Activated CD8-positive, alpha-beta T cell treated with anti-CD3 and anti-CD28 coated beads, Interleukin-2, amount 10 ng/mL, durations not matched to agents 7 days and 5 days (primary cell): ENCODE measurements at regions of chr17 and their contacts with region 1.

Region 1: DNA sequence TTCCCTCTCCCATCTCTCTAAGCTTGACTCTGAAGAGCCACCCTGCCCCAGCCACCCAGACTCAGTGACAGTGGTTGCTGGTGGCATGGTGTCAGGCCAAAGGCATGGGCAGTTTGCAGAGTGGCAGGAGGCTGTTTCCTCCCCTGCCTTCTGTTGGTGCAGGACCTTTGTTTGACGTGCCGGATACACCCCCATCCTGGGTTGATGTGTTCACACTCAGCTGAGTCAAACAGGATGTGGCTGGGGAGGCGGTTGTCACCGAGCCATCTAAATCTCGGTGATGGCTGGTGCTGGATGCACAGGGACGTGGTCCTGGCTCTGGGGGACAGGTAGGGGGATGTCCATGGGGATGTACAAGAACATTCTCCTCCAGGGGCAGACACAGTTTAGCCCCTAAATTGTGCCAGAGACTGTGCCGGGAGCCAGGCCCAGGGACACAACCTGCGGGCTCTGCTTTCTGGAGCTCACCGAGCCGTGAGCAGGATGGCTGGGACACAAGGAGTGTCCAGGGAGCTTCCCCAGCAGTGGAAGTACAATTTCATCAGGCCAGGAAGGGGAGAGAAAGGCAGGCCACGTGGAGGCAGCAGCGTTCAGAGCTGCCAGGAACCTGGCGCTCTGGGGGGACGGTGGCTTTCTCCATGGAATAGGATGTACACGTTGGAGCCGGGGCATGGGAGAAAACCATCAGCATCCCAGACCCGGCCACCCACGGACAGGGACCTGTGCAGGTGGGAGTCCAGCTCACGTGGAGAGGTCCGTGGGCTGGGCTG is 264.2 kb downstream of the SEC14L1 start:
- DNase-seq: peak; percentile 94
- ATAC-seq: peak; percentile 75
- H3K4me3 Mint-ChIP-seq: peak overlapping the region; percentile 92
- H3K27ac Mint-ChIP-seq: peak overlapping the region; percentile 89
- H3K4me1 Mint-ChIP-seq: peaks cover 97% of the 10 kb centered on the region
- H3K27me3 Mint-ChIP-seq: no peaks in the 10 kb centered on the region

Region 2: DNA sequence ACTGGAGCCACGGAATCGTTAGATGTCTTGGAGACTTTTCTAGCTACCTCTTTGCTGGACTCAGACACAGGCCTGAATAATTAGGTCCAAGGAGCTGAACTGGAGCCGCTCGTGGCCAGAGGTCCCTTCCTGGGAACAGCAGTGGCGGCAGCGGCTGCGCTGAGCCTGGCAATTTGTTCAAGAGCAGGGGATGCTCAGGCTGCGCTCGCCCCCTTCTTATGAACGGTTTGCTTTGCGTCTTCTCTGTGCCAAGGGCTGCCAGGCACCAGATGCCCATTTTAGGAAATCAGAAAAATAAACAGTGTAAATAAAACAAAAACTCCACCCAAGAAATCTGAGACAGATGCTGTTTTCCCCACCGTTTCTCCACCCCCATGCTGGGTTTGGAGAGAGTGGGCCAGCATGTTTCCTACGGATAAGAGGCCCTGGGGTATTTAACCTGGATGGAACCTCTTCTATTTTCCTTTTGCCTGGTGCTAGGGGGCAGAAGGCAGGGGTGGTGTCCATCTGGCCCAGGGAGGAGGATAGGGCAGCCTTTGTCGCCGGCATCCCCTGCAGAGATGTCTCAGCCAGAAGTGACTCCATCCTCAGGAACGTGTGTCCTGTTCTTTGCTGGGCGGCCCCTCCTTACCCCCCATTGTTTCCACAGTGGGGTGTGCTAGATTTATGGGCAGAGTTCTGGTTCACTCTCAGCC is 100.8 kb before region 1 on chr17:
- CTCF ChIA-PET with region 1: no interaction called
- POLR2A ChIA-PET with region 1: no interaction called
- DNase-seq: no peak
- ATAC-seq: no peak
- H3K4me3 Mint-ChIP-seq: no peak overlapping the region
- H3K27ac Mint-ChIP-seq: no peak overlapping the region
- H3K4me1 Mint-ChIP-seq: no peaks in the 10 kb centered on the region
- H3K27me3 Mint-ChIP-seq: no peaks in the 10 kb centered on the region

Region 3: GRCh38 chr17:77372444-77373298 is 32.3 kb before region 1 on chr17:
- CTCF ChIA-PET with region 1: interaction called, 51 read pairs
- POLR2A ChIA-PET with region 1: interaction called, 10 read pairs
- DNase-seq: peak; percentile 83
- ATAC-seq: peak; percentile 49
- H3K4me3 Mint-ChIP-seq: peak overlapping the region; percentile 79
- H3K27ac Mint-ChIP-seq: peak overlapping the region; percentile 88
- H3K4me1 Mint-ChIP-seq: peaks cover 56% of the 10 kb centered on the region
- H3K27me3 Mint-ChIP-seq: peaks cover 4% of the 10 kb centered on the region

Region 4: GRCh38 chr17:77420804-77421629 is 16.0 kb after region 1 on chr17:
- CTCF ChIA-PET with region 1: interaction called, 149 read pairs
- POLR2A ChIA-PET with region 1: interaction called, 9 read pairs
- DNase-seq: peak; percentile 55
- ATAC-seq: peak; percentile 54
- H3K4me3 Mint-ChIP-seq: peak overlapping the region; percentile 57
- H3K27ac Mint-ChIP-seq: peak overlapping the region; percentile 80
- H3K4me1 Mint-ChIP-seq: peaks cover 86% of the 10 kb centered on the region
- H3K27me3 Mint-ChIP-seq: no peaks in the 10 kb centered on the region

Region 5: DNA sequence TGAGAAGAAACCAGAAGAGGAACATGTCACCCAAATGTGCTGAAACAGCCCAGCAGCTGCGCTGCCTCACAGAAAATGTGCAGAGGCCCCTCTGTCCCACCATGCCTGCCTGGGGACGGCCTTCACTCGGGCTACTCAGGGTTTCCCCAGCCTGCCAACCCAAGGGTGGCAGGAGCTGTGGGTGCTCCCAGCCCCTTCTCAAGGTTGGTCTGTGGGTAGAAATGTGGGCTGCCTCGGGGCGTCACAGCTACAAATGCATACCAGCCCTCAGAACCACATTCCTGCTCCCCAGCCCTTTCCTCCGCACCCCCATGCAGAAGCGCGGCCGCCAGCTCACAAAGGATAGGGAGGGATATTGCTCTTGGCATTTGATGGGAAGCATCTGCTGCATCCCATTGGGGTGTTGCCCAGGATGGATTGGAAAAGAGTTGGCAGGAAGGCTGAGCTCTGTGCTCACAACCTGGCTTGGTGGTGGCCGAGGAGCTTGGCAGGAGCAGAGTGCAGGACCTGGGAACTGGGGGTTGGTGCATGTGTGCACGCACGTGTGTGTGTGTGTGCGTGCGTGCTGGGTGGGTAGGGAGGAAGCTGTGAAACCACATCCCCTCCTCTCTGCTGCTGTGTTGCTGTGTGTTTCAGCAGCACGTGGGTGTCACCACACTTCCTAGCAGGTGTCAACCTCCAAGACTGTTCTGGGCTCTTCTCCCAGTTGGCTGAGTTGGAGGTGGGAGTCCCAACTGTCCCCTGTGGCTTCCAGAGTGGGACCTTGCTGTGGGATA is 40.2 kb after region 1 on chr17:
- CTCF ChIA-PET with region 1: interaction called, 28 read pairs
- POLR2A ChIA-PET with region 1: interaction called, 11 read pairs
- DNase-seq: peak; percentile 94
- ATAC-seq: peak; percentile 66
- H3K4me3 Mint-ChIP-seq: peak overlapping the region; percentile 82
- H3K27ac Mint-ChIP-seq: peak overlapping the region; percentile 90
- H3K4me1 Mint-ChIP-seq: peaks cover 96% of the 10 kb centered on the region
- H3K27me3 Mint-ChIP-seq: no peaks in the 10 kb centered on the region

Region 6: GRCh38 chr17:77465358-77466041 is 60.5 kb after region 1 on chr17:
- CTCF ChIA-PET with region 1: interaction called, 10 read pairs
- POLR2A ChIA-PET with region 1: interaction called, 4 read pairs
- DNase-seq: peak; percentile 92
- ATAC-seq: peak; percentile 80
- H3K4me3 Mint-ChIP-seq: peak overlapping the region; percentile 63
- H3K27ac Mint-ChIP-seq: peak overlapping the region; percentile 91
- H3K4me1 Mint-ChIP-seq: peaks cover 90% of the 10 kb centered on the region
- H3K27me3 Mint-ChIP-seq: no peaks in the 10 kb centered on the region